ENCODE measurements at regions of chr6 and their contacts with region 1.

Region 1: GRCh38 chr6:124961777-124962611 is at the start of gene RNF217:
- DNase-seq: peak; percentile 79
- ATAC-seq: peak; percentile 82 to 83
- total RNA-seq, gene RNF217: 10.6 to 18.3 TPM

Region 2: GRCh38 chr6:124434421-124434820 is 527.6 kb before region 1 on chr6:
- intact Hi-C with region 1: no loop called
- DNase-seq: no peak
- ATAC-seq: no peak

Region 3: DNA sequence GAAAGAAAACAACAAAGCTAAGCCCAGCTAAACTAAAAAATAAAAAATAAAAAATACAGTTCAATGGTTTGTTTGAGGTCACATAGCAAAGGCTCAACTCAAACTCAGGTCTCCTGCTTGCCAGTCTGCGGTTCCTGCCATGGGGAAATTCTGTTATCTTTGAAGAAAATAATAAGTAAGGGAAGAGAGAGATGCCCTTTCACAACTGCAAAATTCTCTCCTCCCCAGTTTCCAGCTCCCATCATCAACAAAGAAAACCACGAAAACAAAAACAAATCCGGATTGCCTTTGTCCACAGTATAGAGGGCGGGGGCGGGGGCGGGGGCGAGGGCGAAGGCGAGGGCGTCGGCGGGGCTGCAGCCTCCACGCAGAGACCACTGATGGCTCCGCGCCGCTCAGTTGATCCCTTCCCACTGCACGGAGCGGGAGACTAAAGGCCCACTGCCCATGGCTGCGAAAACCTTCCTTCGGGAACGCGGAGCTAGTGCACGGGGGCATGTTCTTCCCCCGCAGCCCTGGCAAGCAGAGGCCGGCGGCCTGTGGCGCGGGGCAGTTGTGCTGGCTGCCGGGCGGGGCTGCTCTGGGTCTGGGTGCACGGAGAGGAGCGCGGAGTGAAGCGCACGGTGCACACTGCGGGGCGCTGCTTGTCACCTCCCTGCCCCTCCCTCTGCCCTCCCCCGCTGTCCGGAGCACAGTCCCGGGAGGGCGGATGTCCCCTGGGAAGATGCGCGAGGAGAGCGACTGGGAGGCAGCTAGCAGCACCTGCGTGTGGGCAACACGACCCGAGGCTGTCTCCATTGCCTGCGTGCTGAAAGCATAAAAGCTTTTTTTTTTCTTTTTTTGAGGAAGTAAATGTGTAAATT is 137.4 kb after region 1 on chr6:
- intact Hi-C with region 1: loop called in 1 of 2 experiments (anchors 10 kb)
- DNase-seq: peak; percentile 67
- ATAC-seq: peak; percentile 93 to 95